Esophagus squamous epithelium (tissue), 5 donors: ENCODE measurements at regions of chr10 and their contacts with region 1.

Region 1: DNA sequence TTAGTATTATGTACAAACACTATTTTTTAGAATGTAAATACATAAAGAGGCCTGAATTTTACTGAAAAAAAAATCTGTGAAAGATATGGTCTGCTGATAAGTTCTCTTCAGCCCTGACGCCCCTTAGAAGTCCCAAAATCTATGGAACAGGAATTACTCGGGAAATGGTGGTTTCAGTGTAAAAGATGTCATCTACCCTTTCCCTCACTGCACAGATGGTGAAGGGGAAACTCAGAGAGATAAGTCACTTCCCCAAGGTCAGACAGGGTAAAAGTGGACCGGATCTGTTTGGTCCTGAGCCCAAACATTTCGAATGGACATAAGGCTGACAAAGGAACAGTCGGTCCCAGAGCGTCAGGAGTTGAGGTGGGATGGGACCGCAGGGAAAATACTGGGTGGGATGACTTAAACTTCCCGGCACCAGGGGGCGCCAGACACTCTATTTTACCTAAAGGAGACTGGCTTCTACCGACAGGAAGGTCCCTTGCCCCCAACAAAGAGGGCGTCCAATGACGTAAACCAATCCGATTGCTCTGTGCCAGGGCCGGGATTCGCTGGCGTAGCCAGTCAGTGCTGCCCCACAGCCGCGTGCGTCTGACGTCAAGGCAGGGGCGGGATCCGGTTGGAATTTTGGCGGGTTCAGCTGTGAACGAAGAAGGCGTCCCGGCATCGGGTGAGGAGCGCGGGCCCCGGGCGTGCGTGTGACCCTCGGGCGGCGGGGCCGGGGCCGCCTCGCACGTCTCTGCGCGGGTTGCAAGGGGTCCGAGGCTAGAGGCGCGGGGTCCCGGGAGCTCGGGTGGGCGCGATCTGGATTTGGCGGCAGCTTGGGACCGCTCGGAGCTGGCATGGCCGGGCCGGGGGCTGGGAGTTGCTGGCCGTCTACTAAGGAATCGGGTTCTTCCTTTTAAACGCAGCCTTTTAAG is at the start of gene MCM10:
- DNase-seq: peak; percentile 85
- H3K4me3 ChIP-seq: peak within 1 kb of the TSS; percentile 38 to 65 (median 50)
- H3K27ac ChIP-seq: peak within 1 kb of the TSS; percentile 13 to 59 (median 34)
- H3K4me1 ChIP-seq: peaks cover 0 to 20% (median 12%) of the 10 kb centered on the region in 3 donors
- H3K27me3 ChIP-seq: no peaks in the 10 kb centered on the region
- CTCF ChIP-seq: peak; percentile 79 to 96 (median 90)
- POLR2A ChIP-seq: no peak
- total RNA-seq, gene MCM10: 2.3 to 9.2 (median 4.0) TPM

Region 2: GRCh38 chr10:13299437-13300287 is 138.5 kb after region 1 on chr10 and contains the start of gene PHYH:
- intact Hi-C with region 1: loop called (anchors 5 kb)
- DNase-seq: peak; percentile 25
- H3K4me3 ChIP-seq: peak within 1 kb of the TSS; percentile 69 to 85 (median 80)
- H3K27ac ChIP-seq: peak within 1 kb of the TSS; percentile 86 to 96 (median 92)
- H3K4me1 ChIP-seq: peaks cover 4 to 46% (median 6%) of the 10 kb centered on the region in 3 donors
- H3K27me3 ChIP-seq: no peaks in the 10 kb centered on the region
- CTCF ChIP-seq: peak in 1 of 6 experiments; percentile 6
- POLR2A ChIP-seq: peak in 2 of 4 donors; percentile 69 to 86
- total RNA-seq, gene PHYH: 4.1 to 14.2 (median 7.5) TPM